Activated CD4-positive, alpha-beta T cell treated with anti-CD3 and anti-CD28 coated beads, Interleukin-2, amount 10 ng/mL, durations not matched to agents 24 days and 14 days (primary cell): ENCODE measurements at regions of chr1 and their contacts with region 1.

Region 1: DNA sequence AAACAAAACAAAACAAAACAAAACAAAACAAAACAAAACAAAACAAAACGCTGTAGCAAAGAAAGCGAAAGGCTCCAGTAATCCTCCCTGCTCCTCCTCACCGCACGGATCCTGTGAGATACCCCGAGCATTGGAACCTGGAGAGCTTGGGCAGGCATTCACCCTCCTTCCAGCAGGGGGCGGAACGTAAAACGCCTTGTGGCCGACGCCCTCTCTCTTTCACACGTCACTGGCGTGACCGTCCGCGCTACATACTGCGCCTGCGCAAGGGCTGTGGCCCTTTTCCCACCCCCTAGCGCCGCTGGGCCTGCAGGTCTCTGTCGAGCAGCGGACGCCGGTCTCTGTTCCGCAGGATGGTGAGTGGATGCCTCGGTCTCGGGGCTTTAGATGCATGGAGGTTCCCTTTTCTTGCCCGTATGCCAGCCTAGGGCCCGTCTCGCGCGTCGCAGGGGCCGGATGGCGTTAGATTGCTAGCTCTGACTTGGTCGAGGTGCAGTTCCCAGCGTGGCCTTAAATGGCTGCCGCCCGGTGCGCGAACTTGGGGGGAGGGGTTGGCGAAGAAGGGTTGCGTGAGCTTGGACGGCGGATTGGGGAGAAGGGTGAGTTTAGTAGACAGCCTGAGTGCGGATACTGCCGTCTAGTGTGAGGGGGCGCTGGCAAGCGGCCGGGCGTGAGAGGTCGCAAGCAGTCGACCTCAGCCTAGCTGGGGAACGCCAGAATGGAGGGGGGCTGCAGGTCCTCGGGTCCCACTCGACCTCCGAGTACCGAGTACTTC is at the start of gene RPL5:
- DNase-seq: peak; percentile 99
- H3K4me3 Mint-ChIP-seq: peak within 1 kb of the TSS; percentile 99
- H3K27ac Mint-ChIP-seq: peak within 1 kb of the TSS; percentile 98
- H3K4me1 Mint-ChIP-seq: peaks cover 43% of the 10 kb centered on the region
- H3K27me3 Mint-ChIP-seq: peaks cover 2% of the 10 kb centered on the region
- total RNA-seq, gene RPL5: 1,231 and 1,282 TPM in 2 replicates

Region 2: GRCh38 chr1:91021686-91022517 is 1810.0 kb before region 1 on chr1 and contains the start of gene ZNF644:
- intact Hi-C with region 1: loop called (anchors 5 kb)
- DNase-seq: peak; percentile 96
- H3K4me3 Mint-ChIP-seq: peak within 1 kb of the TSS; percentile 96
- H3K27ac Mint-ChIP-seq: peak within 1 kb of the TSS; percentile 100
- H3K4me1 Mint-ChIP-seq: peaks cover 42% of the 10 kb centered on the region
- H3K27me3 Mint-ChIP-seq: peaks cover under 1% of the 10 kb centered on the region
- total RNA-seq, gene ZNF644: 57.0 and 57.7 TPM in 2 replicates

Region 3: DNA sequence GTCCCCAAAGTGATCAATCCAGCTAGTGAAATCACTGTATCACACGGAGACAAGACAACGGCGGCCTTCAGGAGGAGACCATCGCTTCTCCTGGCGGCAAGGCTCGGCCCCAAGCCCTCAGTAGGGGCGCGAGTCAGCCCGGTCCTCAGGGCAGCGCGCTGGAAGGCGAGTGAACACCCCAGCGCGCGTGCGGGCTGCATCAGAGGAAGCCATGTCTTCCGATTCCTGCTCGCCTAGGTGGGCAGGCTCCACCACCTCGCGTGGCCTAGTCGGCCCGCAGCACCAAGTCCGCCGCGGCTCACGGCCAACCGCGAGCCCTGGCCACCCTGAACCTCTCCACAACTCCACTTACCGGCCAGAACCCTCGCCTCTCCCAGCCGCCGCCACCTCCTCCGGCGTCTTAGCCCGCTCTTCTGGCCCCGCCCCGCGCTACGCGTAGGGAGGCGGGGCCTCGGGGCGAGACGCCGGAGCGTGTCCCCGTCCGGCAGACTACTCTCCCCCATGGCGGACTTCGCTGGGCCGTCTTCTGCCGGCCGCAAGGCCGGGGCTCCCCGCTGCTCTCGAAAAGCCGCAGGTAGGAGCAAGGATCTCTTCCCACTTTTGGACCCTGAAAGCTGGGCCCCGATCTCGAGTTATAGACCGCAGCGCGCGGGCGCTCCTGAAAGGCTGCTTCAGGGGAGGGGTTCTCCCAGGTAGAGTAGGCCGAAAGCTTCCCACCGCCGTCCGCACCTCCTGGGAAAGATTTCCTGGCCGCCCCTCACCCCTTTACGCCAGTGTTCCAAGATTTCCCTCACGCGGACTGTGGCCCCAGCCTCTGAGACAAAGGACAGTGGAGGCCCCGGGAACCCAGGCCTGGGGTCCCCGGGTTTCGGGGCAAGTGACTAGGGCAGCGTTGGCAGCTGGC is 533.1 kb before region 1 on chr1 and contains the starts of genes GLMN and RPAP2:
- intact Hi-C with region 1: loop called (anchors 5 kb)
- DNase-seq: peak; percentile 94
- H3K4me3 Mint-ChIP-seq: peak within 1 kb of the TSS; percentile 99
- H3K27ac Mint-ChIP-seq: peak within 1 kb of the TSS; percentile 99
- H3K4me1 Mint-ChIP-seq: peaks cover 40% of the 10 kb centered on the region
- H3K27me3 Mint-ChIP-seq: no peaks in the 10 kb centered on the region
- total RNA-seq, gene GLMN: 24.2 and 28.5 TPM in 2 replicates
- total RNA-seq, gene RPAP2: 39.4 and 46.8 TPM in 2 replicates

Region 4: DNA sequence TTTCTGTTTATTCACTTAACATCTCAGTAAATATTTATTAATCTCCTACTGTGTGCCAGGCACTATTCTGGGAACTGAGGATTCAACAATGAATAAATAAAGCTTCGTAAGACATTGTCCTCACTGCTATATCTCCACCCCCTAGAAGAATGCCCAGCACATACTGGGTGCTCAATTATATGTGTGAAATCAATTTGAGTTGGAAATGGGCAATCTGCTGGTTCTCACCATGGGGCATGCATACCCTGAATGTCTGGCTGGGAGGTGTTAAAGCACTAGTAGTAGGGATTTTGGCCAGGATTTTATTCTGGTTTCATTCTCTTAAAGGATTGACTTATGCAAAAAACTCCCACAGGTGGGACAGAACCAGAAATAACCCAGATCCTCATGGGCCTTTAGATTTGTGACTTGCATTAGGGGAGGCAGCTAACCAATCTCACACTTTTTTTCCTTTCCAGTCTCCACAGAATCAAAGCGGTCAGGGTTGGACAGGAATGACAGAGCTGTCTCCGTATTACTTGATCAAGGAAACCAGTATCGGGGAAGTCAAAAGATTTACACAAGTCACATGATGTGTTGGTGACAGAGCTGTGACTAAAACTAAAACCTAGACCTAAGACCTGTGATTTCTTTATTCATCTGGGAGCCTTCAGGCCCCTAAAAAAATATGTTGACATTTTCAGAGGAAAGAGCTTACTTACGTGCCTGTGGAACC is 358.0 kb before region 1 on chr1:
- intact Hi-C with region 1: loop called (anchors 5 kb)
- DNase-seq: peak; percentile 80
- H3K4me3 Mint-ChIP-seq: peak overlapping the region; percentile 48
- H3K27ac Mint-ChIP-seq: peak overlapping the region; percentile 89
- H3K4me1 Mint-ChIP-seq: peaks cover 67% of the 10 kb centered on the region
- H3K27me3 Mint-ChIP-seq: no peaks in the 10 kb centered on the region

Region 5: DNA sequence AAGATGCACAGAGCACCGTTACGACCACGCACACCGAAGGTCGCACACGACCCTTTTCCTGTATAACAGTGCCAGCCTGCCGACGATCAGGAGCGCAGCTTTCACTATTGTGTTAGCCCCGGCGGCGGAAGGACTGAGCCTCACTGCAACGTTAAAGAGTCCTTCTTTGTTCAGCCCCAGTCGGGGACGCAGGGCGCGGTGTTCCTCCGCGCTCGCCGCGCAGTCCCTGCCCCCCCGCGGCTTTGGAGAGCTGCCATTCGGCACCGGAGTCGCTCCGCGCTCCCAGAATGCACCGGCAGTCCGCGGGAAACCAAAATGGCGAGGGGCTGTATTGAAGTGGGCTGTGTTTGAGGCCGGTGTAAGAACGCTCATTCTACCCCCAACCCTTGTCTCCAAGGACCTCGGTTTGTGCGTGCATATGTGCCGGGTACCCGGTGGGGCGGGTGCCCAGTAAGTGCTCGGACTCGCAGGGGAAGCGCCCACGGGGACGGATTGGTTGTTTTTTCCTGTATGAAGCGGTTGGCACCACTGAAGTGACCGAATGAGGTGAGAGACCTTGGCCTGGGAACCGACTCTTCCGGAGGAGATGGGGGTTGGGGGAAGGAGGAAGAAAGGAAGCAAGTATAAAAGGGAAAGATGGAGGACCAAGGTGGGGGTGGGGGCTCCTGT is 247.2 kb after region 1 on chr1 and contains the start of gene MTF2:
- intact Hi-C with region 1: loop called (anchors 1 kb)
- DNase-seq: peak; percentile 98
- H3K4me3 Mint-ChIP-seq: peak within 1 kb of the TSS; percentile 99
- H3K27ac Mint-ChIP-seq: peak within 1 kb of the TSS; percentile 94
- H3K4me1 Mint-ChIP-seq: peaks cover 35% of the 10 kb centered on the region
- H3K27me3 Mint-ChIP-seq: no peaks in the 10 kb centered on the region
- total RNA-seq, gene MTF2: 63.7 and 64.3 TPM in 2 replicates

Region 6: GRCh38 chr1:93179886-93180722 is 348.2 kb after region 1 on chr1 and contains the start of gene TMED5:
- intact Hi-C with region 1: loop called (anchors 5 kb)
- DNase-seq: peak; percentile 99
- H3K4me3 Mint-ChIP-seq: peak within 1 kb of the TSS; percentile 95
- H3K27ac Mint-ChIP-seq: peak within 1 kb of the TSS; percentile 100
- H3K4me1 Mint-ChIP-seq: peaks cover 42% of the 10 kb centered on the region
- H3K27me3 Mint-ChIP-seq: no peaks in the 10 kb centered on the region
- total RNA-seq, gene TMED5: 43.1 and 44.7 TPM in 2 replicates

Region 7: GRCh38 chr1:93680757-93681550 is 849.0 kb after region 1 on chr1:
- intact Hi-C with region 1: no loop called
- DNase-seq: peak; percentile 79
- H3K4me3 Mint-ChIP-seq: peak overlapping the region; percentile 83
- H3K27ac Mint-ChIP-seq: no peak overlapping the region
- H3K4me1 Mint-ChIP-seq: peaks cover 8% of the 10 kb centered on the region
- H3K27me3 Mint-ChIP-seq: peaks cover 73% of the 10 kb centered on the region

Region 8: DNA sequence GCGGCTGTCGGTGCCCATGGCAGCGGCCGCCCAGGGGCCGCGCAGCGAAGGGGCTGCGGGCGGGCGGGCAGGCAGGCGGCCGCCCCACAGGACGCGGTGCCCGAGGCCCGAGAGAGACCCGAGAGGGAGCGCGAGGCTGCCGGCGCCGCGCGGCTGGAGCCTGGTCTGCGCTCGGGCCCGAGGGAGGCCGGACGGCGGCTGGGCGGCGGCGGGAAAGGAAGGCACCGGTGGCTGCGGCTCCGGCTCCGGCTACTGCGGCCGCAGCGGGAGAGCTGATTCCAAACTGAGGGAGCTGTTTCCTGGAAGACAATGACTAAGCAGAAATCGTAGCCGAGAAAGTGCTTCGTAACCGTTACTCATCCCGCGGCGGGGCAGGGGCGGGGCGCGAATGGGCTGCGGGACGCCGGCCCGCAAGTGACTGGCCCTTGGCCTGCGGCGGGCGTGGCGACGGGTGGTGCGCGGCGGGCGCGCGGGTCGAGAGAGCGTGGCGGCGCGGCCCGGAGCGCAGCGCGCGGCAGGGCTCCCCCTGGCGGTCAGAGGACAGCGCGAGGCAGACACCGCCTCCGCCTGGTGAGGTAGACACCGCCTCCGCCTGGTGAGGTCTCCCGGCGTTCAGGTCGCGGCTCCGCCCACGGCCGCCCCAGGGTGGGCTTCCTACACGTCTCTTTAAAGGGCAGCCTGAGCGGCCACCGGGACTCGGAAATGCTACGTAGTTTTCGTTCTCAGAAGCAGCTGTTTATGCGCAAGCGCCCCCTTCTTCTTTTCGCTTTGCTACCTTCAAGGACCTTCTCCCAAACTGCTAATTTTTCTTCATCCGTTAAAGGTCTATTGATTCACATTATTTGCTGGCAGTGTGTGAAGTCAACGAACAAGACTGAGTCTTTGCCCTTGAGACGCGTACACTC is 1077.4 kb after region 1 on chr1 and contains the start of gene GCLM:
- intact Hi-C with region 1: loop called (anchors 2 kb)
- DNase-seq: peak; percentile 97
- H3K4me3 Mint-ChIP-seq: peak within 1 kb of the TSS; percentile 87
- H3K27ac Mint-ChIP-seq: peak within 1 kb of the TSS; percentile 93
- H3K4me1 Mint-ChIP-seq: peaks cover 29% of the 10 kb centered on the region
- H3K27me3 Mint-ChIP-seq: peaks cover 20% of the 10 kb centered on the region
- total RNA-seq, gene GCLM: 20.9 and 22.4 TPM in 2 replicates